MCF 10A (cell line): ENCODE measurements at regions of chr1 and their contacts with region 1.

Region 1: GRCh38 chr1:99526926-99527477 is 118.9 kb upstream of the PALMD start:
- DNase-seq: peak; percentile 21
- H3K4me3 Mint-ChIP-seq: no peak overlapping the region
- H3K27ac Mint-ChIP-seq: no peak overlapping the region
- H3K4me1 Mint-ChIP-seq: no peaks in the 10 kb centered on the region
- H3K27me3 Mint-ChIP-seq: no peaks in the 10 kb centered on the region
- CTCF ChIP-seq: peak; percentile 30

Region 2: DNA sequence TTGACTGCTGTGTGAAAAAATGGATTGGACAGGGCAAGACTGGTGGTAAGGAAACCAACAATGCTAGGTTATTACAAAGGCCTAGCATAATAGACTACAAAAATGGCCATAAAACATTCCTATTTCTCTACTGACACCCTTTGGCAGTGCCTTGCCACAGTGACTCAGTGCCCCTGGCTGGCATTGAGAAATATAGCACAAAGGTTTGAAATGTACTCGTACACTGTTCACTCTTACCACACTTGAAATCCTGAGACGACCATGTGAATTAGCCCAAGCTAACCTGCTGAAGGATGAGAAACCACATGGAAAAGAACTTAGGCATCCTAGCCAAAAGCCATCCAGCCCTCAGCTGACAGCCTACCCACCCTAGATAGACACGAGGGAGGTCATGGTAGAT is 30.9 kb before region 1 on chr1:
- CTCF ChIA-PET with region 1: interaction called, 15 read pairs
- POLR2A ChIA-PET with region 1: no interaction called
- intact Hi-C with region 1: no loop called
- DNase-seq: peak; percentile 77
- H3K4me3 Mint-ChIP-seq: no peak overlapping the region
- H3K27ac Mint-ChIP-seq: peak overlapping the region; percentile 46
- H3K4me1 Mint-ChIP-seq: peaks cover 15% of the 10 kb centered on the region
- H3K27me3 Mint-ChIP-seq: no peaks in the 10 kb centered on the region
- CTCF ChIP-seq: no peak